ENCODE measurements at regions of chr1 and their contacts with region 1.

Region 1: GRCh38 chr1:226121587-226122400 is 59.3 kb downstream of the H3-3A start:
- DNase-seq: peak; percentile 98
- H3K4me3 ChIP-seq: peak overlapping the region; percentile 64 to 73
- H3K27ac ChIP-seq: peak overlapping the region in 1 of 2 experiments; percentile 90; a peak in 2 of 4 replicates
- H3K4me1 ChIP-seq: peaks cover 0 to 15% of the 10 kb centered on the region in 2 experiments; a peak in 2 of 4 replicates
- H3K27me3 ChIP-seq: no peaks in the 10 kb centered on the region
- CTCF ChIP-seq: peak; percentile 63
- EP300 ChIP-seq: no peak; a peak in 1 of 4 replicates
- RAD21 ChIP-seq: peak; percentile 73

Region 2: DNA sequence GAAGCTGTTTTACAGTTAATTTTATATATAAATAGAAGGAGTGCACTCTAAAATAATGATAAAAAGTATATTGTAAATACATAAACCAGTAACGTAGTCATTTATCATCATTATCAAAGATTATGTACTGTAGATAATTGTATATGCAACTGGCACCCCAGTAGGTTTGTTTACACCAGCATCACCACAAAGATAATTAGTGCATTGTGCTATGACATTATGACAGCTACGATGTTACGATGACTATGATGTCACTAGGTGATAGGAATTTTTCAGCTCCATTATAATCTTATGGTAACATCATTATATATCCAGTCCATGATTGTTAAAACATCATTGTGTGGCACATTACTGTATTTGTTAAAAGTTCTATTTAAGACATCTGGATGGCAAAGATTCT is 879.2 kb before region 1 on chr1:
- CTCF ChIA-PET with region 1: no interaction called
- POLR2A ChIA-PET with region 1: no interaction called
- DNase-seq: no peak
- H3K4me3 ChIP-seq: no peak overlapping the region
- H3K27ac ChIP-seq: no peak overlapping the region
- H3K4me1 ChIP-seq: no peaks in the 10 kb centered on the region
- H3K27me3 ChIP-seq: no peaks in the 10 kb centered on the region
- CTCF ChIP-seq: no peak
- EP300 ChIP-seq: no peak
- RAD21 ChIP-seq: no peak

Region 3: GRCh38 chr1:225944951-225945350 is 176.8 kb before region 1 on chr1:
- CTCF ChIA-PET with region 1: no interaction called
- POLR2A ChIA-PET with region 1: no interaction called
- DNase-seq: no peak
- H3K4me3 ChIP-seq: no peak overlapping the region
- H3K27ac ChIP-seq: no peak overlapping the region
- H3K4me1 ChIP-seq: peaks cover 0 to 16% of the 10 kb centered on the region in 2 experiments; a peak in 1 of 4 replicates
- H3K27me3 ChIP-seq: no peaks in the 10 kb centered on the region; the same call in 1 of the 2 replicates
- CTCF ChIP-seq: no peak
- EP300 ChIP-seq: no peak
- RAD21 ChIP-seq: no peak

Region 4: GRCh38 chr1:226083302-226084101 is 38.3 kb before region 1 on chr1:
- CTCF ChIA-PET with region 1: interaction called, 22 read pairs
- POLR2A ChIA-PET with region 1: interaction called, 8 read pairs
- DNase-seq: peak; percentile 98
- H3K4me3 ChIP-seq: peak overlapping the region; percentile 64 to 81
- H3K27ac ChIP-seq: peak overlapping the region; percentile 64 to 82
- H3K4me1 ChIP-seq: peaks cover 0 to 5% of the 10 kb centered on the region in 2 experiments; a peak in 2 of 4 replicates
- H3K27me3 ChIP-seq: no peaks in the 10 kb centered on the region
- CTCF ChIP-seq: no peak
- EP300 ChIP-seq: no peak
- RAD21 ChIP-seq: peak; percentile 18; the same call in 1 of the 2 replicates

Region 5: GRCh38 chr1:226149806-226150205 is 28.0 kb after region 1 on chr1:
- CTCF ChIA-PET with region 1: interaction called, 19 read pairs
- POLR2A ChIA-PET with region 1: no interaction called
- DNase-seq: peak; percentile 49
- H3K4me3 ChIP-seq: no peak overlapping the region
- H3K27ac ChIP-seq: no peak overlapping the region; a peak in 1 of 4 replicates
- H3K4me1 ChIP-seq: no peaks in the 10 kb centered on the region
- H3K27me3 ChIP-seq: no peaks in the 10 kb centered on the region
- CTCF ChIP-seq: no peak
- EP300 ChIP-seq: no peak
- RAD21 ChIP-seq: no peak; the same call in 1 of the 2 replicates

Region 6: GRCh38 chr1:226186124-226187018 is 64.6 kb after region 1 on chr1 and contains the start of gene ACBD3:
- CTCF ChIA-PET with region 1: interaction called, 48 read pairs
- POLR2A ChIA-PET with region 1: no interaction called
- DNase-seq: peak; percentile 98
- H3K4me3 ChIP-seq: peak within 1 kb of the TSS; percentile 71 to 82
- H3K27ac ChIP-seq: peak within 1 kb of the TSS; percentile 78 to 88
- H3K4me1 ChIP-seq: peaks cover 0 to 12% of the 10 kb centered on the region in 2 experiments; a peak in 3 of 4 replicates
- H3K27me3 ChIP-seq: no peaks in the 10 kb centered on the region
- CTCF ChIP-seq: peak; percentile 16; the same call in 1 of the 2 replicates
- EP300 ChIP-seq: no peak
- RAD21 ChIP-seq: no peak
- polyA plus RNA-seq, gene ACBD3: 17.8 and 26.3 TPM in 2 replicates

Region 7: GRCh38 chr1:226308723-226309315 is 187.0 kb after region 1 on chr1 and contains the start of gene LIN9:
- CTCF ChIA-PET with region 1: interaction called, 22 read pairs
- POLR2A ChIA-PET with region 1: interaction called, 3 read pairs
- DNase-seq: peak; percentile 95
- H3K4me3 ChIP-seq: peak within 1 kb of the TSS; percentile 93 to 95
- H3K27ac ChIP-seq: peak within 1 kb of the TSS; percentile 64 to 83
- H3K4me1 ChIP-seq: peaks cover 0 to 8% of the 10 kb centered on the region in 2 experiments; a peak in 3 of 4 replicates
- H3K27me3 ChIP-seq: no peaks in the 10 kb centered on the region
- CTCF ChIP-seq: peak; percentile 12; the same call in 1 of the 2 replicates
- EP300 ChIP-seq: no peak
- RAD21 ChIP-seq: no peak
- polyA plus RNA-seq, gene LIN9: 1.7 and 2.5 TPM in 2 replicates

Region 8: DNA sequence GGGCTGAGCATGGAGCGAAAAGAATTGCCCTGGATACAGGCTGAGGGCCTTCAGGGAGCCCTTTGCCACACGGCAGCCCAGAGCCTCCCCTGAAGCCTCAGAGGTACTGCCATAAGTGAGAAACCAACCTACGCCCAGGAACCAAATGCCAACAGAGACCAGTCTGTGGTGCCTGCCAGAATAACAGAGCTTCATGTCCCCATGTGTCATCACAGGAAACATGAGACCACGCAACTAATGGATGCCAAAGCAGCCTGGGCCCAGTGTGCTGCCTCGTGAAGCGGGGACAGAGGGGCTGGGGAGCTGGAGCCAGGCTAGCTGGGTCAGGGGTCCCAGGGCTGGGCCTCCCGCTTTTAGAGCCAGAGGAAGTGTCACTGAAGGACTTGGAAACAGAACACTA is 408.1 kb after region 1 on chr1:
- CTCF ChIA-PET with region 1: no interaction called
- POLR2A ChIA-PET with region 1: no interaction called
- DNase-seq: no peak
- H3K4me3 ChIP-seq: no peak overlapping the region
- H3K27ac ChIP-seq: no peak overlapping the region
- H3K4me1 ChIP-seq: no peaks in the 10 kb centered on the region; a peak in 1 of 4 replicates
- H3K27me3 ChIP-seq: peaks cover 9% of the 10 kb centered on the region; the same call in 1 of the 2 replicates
- CTCF ChIP-seq: no peak
- EP300 ChIP-seq: no peak
- RAD21 ChIP-seq: no peak

Measured in SK-N-SH (cell line).